PC-9 (cell line): ENCODE measurements at regions of chr2 and their contacts with region 1.

Region 1: DNA sequence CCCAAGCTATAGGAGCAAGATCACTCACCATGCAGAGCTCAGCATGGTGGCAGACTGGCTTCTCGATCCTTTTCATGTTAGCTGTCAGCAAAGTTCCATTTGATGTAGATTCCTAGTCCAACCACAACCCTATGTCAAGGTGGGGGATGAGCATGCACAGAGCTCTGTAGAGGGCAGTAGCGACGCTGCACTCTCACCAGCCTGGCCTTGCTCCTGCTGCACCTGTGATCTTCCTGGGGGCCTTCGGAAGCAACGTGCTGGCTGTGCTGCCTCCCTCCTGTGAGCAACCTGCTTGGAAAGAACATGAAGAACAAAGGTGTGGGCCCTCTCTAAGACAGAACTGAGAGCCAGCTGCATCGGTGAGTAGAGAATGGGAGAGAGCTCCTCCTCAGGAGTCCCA is 479.4 kb upstream of the MYT1L start:
- DNase-seq: no peak
- H3K4me3 ChIP-seq: no peak overlapping the region
- H3K27ac ChIP-seq: no peak overlapping the region
- H3K4me1 ChIP-seq: no peaks in the 10 kb centered on the region
- H3K27me3 ChIP-seq: peaks cover 51% of the 10 kb centered on the region
- CTCF ChIP-seq: no peak

Region 2: GRCh38 chr2:3641841-3642421 is 831.4 kb after region 1 on chr2:
- CTCF ChIA-PET with region 1: no interaction called
- POLR2A ChIA-PET with region 1: interaction called, 13 read pairs
- intact Hi-C with region 1: no loop called
- DNase-seq: no peak
- H3K4me3 ChIP-seq: no peak overlapping the region
- H3K27ac ChIP-seq: no peak overlapping the region
- H3K4me1 ChIP-seq: no peaks in the 10 kb centered on the region
- H3K27me3 ChIP-seq: no peaks in the 10 kb centered on the region
- CTCF ChIP-seq: no peak